ENCODE measurements at regions of chr12 and their contacts with region 1.

Region 1: DNA sequence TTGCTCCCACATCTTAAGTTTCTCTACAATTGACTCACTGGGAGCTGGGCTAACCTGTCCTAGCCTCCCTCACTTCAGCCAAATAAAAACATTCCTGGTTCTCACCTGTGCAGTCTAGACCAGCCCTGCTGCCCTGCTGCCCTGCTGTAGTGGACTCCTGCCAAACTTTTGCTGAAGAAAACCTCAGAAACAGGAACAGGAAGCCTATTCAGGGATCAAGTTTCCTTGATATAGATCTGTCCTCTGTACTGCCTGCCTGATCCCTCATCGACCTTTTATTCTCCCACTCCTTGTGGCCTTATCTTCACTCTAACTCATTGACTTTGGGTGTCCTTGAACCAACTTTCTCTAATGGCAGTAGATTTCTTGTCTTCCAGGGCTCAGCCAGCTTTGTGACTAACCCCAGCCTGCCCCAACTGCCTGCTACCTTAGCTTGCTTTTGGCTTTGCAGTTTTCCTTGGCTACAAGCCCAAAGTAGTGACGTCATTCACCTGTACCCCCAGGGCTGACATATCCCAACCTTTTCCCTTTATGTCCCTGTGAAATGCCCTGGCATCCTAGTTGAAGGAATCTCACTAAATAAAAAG is 234.8 kb downstream of the DUSP6 start:
- DNase-seq: peak; percentile 88
- H3K4me3 Mint-ChIP-seq: peak overlapping the region; percentile 41
- H3K27ac Mint-ChIP-seq: peak overlapping the region; percentile 87
- H3K4me1 Mint-ChIP-seq: peaks cover 27% of the 10 kb centered on the region
- H3K27me3 Mint-ChIP-seq: no peaks in the 10 kb centered on the region
- CTCF ChIP-seq: no peak

Region 2: GRCh38 chr12:88922816-88923215 is 194.7 kb before region 1 on chr12:
- CTCF ChIA-PET with region 1: no interaction called
- intact Hi-C with region 1: no loop called
- DNase-seq: no peak
- H3K4me3 Mint-ChIP-seq: no peak overlapping the region
- H3K27ac Mint-ChIP-seq: no peak overlapping the region
- H3K4me1 Mint-ChIP-seq: peaks cover 59% of the 10 kb centered on the region
- H3K27me3 Mint-ChIP-seq: no peaks in the 10 kb centered on the region
- CTCF ChIP-seq: no peak

Region 3: DNA sequence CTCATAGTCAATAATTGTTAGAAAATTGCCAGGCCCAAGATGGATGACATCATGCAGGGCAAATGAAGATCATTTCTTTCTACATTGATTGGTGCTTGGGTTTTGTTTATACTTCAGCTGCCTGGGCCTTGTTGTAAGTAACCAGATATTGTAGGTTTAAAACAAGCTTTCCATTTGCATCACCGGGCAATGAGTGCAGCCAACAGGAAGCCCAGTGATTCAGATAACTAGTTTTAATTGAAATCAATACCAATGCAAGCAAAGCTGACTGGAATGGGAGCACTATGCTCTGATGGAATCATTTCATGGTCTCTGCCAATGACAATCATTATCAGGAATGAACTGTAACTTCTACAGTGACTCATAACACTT is 44.5 kb before region 1 on chr12:
- CTCF ChIA-PET with region 1: no interaction called
- intact Hi-C with region 1: loop called (anchors 1 kb)
- DNase-seq: peak; percentile 75
- H3K4me3 Mint-ChIP-seq: peak overlapping the region; percentile 23
- H3K27ac Mint-ChIP-seq: peak overlapping the region; percentile 77
- H3K4me1 Mint-ChIP-seq: peaks cover 45% of the 10 kb centered on the region
- H3K27me3 Mint-ChIP-seq: no peaks in the 10 kb centered on the region
- CTCF ChIP-seq: no peak